CD8-positive, alpha-beta memory T cell (primary cell): ENCODE measurements at regions of chr7 and their contacts with region 1.

Region 1: DNA sequence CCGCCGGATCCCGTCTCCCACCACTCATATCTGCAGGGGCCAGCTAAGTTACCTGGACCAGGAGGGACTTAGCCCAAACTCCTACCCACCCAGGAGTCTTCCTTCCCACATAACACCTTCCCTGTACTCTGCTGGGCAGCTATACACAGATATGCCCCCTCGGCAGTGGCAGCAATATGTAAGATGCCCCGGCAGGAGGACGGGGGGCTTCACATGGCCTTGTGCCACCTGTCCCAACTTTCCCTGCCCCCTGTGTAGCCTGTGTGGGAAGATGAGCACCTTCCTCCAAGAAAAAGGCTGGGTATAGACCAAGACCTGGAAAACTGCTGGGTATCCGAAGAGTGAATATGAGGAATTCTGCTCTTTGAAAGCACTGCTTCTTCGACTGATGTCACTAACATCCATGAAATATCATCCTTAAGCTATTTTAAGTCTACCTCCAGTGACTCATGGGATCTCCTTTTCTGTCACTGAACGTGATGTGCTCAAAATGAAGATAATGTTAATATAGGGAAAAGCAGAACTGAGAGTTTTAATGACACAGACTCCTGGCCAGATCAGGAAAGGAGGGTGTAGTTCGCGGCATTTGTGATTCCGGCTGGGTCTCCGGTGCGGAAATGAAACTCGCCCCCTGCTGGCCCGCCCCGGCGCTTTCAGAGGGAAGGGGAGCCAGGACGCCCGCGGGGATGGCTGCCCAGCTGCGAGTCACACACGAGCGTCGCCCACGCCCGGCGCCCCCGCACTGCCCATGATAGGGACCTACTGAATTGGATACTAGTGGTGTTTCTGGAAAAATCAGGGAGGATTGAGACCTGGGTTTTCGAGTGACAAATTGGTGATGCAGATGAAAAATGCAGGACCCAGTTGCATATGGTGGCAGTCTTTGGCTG is 256.9 kb upstream of the NFE2L3 start:
- DNase-seq: peak; percentile 37 to 69 (median 50)
- H3K4me3 ChIP-seq: peak overlapping the region; percentile 30
- H3K4me3 Mint-ChIP-seq: peak overlapping the region in 6 of 7 donors; percentile 60 to 80 (median 64)
- H3K27ac ChIP-seq: no peak overlapping the region
- H3K27ac Mint-ChIP-seq: peak overlapping the region in 1 of 8 donors; percentile 9
- H3K4me1 ChIP-seq: peaks cover 15% of the 10 kb centered on the region
- H3K4me1 Mint-ChIP-seq: peaks cover 24 to 35% (median 34%) of the 10 kb centered on the region in 3 donors
- H3K27me3 ChIP-seq: no peaks in the 10 kb centered on the region
- H3K27me3 Mint-ChIP-seq: peaks cover under 1 to 8% of the 10 kb centered on the region in 2 donors

Region 2: GRCh38 chr7:25908154-25908949 is 13.2 kb after region 1 on chr7:
- CTCF ChIA-PET with region 1: interaction called, 28 read pairs
- POLR2A ChIA-PET with region 1: no interaction called
- DNase-seq: no peak
- H3K4me3 ChIP-seq: no peak overlapping the region
- H3K4me3 Mint-ChIP-seq: no peak overlapping the region
- H3K27ac ChIP-seq: no peak overlapping the region
- H3K27ac Mint-ChIP-seq: no peak overlapping the region
- H3K4me1 ChIP-seq: no peaks in the 10 kb centered on the region
- H3K4me1 Mint-ChIP-seq: peaks cover 0 to 2% (median 0%) of the 10 kb centered on the region in 3 donors
- H3K27me3 ChIP-seq: no peaks in the 10 kb centered on the region
- H3K27me3 Mint-ChIP-seq: peaks cover 0 to 21% of the 10 kb centered on the region in 2 donors

Region 3: GRCh38 chr7:26061688-26062150 is 166.6 kb after region 1 on chr7:
- CTCF ChIA-PET with region 1: interaction called, 70 read pairs
- POLR2A ChIA-PET with region 1: interaction called, 8 read pairs
- DNase-seq: peak; percentile 53 to 80 (median 60)
- H3K4me3 ChIP-seq: no peak overlapping the region
- H3K4me3 Mint-ChIP-seq: no peak overlapping the region
- H3K27ac ChIP-seq: no peak overlapping the region
- H3K27ac Mint-ChIP-seq: no peak overlapping the region
- H3K4me1 ChIP-seq: no peaks in the 10 kb centered on the region
- H3K4me1 Mint-ChIP-seq: peaks cover 2 to 8% (median 5%) of the 10 kb centered on the region in 3 donors
- H3K27me3 ChIP-seq: no peaks in the 10 kb centered on the region
- H3K27me3 Mint-ChIP-seq: peaks cover 9 to 54% of the 10 kb centered on the region in 2 donors

Region 4: DNA sequence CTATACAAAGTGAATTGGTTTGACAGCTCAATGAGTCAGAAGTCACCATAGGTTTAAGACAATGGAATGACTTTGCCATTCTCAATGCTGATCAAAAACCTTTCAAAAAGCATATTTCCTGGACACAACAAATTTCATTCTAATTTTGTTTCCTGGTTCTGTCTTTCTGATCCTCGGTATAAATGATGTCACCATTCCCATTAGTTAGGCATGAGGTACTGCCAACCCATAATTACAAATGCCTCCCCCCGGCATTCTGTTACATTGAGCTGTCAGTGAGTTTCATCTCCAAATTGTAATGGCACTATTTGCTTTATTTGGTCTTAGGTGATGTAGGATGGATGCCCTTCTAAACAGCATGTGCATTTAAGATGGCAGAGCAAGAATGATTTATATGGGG is 175.1 kb after region 1 on chr7:
- CTCF ChIA-PET with region 1: interaction called, 13 read pairs
- POLR2A ChIA-PET with region 1: no interaction called
- DNase-seq: no peak
- H3K4me3 ChIP-seq: no peak overlapping the region
- H3K4me3 Mint-ChIP-seq: no peak overlapping the region
- H3K27ac ChIP-seq: no peak overlapping the region
- H3K27ac Mint-ChIP-seq: no peak overlapping the region
- H3K4me1 ChIP-seq: no peaks in the 10 kb centered on the region
- H3K4me1 Mint-ChIP-seq: no peaks in the 10 kb centered on the region
- H3K27me3 ChIP-seq: no peaks in the 10 kb centered on the region
- H3K27me3 Mint-ChIP-seq: peaks cover 8 to 41% of the 10 kb centered on the region in 2 donors

Region 5: DNA sequence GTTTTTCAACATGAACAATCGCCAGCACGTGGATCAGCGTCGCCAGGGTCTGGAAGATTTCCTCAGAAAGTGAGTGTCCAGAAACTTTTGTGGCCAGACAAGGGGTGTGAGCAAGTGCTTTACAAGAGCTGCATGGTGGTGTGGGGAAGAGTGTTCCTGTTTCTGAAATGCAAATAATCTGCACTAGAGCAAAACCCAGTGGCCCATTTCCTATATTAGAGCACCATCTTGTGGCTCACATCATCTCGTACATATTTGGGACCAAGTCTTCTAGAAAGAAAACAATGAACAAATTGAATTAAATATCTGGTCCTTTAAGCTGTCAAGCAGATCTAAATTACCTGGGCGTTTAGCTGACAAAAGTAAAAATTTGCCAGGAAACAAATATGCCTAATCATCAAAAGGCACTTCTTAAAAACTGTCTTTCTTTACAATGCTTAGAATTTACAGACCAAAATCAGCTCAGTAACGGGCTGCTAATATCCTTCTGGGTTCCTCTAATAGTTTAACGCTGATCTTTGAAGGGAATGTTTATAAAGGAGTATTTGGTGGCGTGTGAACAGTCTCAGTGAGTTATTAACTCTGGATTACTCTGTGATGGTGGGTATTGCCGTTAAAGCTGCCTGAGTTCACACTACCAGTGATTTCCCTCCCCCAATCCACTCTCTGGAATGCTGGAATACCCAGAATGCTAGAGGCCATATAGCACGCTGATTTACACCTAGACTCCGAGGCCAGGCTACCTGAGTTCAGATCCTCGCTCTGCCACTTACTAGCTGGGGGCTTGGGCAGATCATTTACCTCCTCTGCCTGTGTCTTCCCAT is 470.1 kb after region 1 on chr7:
- CTCF ChIA-PET with region 1: interaction called, 85 read pairs
- POLR2A ChIA-PET with region 1: interaction called, 7 read pairs
- DNase-seq: peak in 4 of 5 donors; percentile 12 to 62 (median 58)
- H3K4me3 ChIP-seq: no peak overlapping the region
- H3K4me3 Mint-ChIP-seq: no peak overlapping the region
- H3K27ac ChIP-seq: no peak overlapping the region
- H3K27ac Mint-ChIP-seq: peak overlapping the region in 3 of 8 donors; percentile 52 to 92 (median 79)
- H3K4me1 ChIP-seq: peaks cover 7% of the 10 kb centered on the region
- H3K4me1 Mint-ChIP-seq: peaks cover 7 to 12% (median 8%) of the 10 kb centered on the region in 3 donors
- H3K27me3 ChIP-seq: no peaks in the 10 kb centered on the region
- H3K27me3 Mint-ChIP-seq: no peaks in the 10 kb centered on the region